ENCODE measurements at regions of chr12 and their contacts with region 1.

Region 1: DNA sequence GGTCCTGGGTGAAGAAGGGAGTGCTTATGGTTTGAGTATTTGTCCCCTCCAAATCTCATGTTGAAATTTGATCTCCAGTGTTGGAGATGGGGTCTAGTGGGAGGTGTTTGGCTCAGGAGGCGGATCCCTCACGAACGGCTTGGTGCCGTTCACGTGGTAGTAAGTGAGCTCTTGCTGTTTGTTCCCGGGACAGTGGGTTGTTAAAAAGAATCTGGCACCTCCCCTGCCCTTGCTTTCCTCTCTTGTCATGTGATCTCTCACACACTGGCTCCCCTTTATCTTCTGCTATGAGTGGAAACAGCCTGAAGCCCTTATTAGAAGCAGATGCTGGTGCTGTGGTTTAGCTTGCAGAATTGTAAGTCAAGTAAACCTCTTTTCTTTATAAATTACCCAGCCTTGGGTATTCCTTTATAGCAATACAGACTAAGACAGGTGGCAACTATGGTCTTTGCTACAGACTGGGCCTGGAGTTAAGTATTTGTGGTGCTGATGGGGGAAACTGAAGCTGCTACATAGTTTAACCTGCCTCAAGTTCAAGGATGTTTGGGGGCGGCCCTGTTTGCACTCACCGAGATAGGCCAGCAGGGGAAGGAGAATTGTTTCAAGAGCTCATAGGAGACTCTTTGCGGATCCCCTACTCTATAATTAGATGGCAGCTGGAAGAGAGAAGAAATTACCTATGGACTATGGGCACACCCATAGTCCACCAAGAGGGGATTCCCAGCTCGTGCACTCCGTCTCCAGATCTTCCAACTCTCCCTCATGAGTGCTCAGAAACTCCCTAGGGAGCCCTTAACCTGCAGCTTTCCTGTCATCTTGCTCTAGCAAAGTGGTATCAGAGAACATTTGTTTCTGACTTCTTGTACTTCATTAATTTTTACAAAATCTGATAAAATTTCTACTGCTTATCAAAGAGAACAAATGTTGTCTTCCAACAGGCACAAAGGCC is 164.6 kb downstream of the SLC15A5 start:
- DNase-seq: no peak
- ATAC-seq: no peak
- H3K4me3 ChIP-seq: no peak overlapping the region
- H3K27ac ChIP-seq: no peak overlapping the region
- H3K4me1 ChIP-seq: no peaks in the 10 kb centered on the region
- H3K27me3 ChIP-seq: no peaks in the 10 kb centered on the region
- CTCF ChIP-seq: no peak
- POLR2A ChIP-seq: no peak
- RAD21 ChIP-seq: no peak

Region 2: GRCh38 chr12:16056910-16057309 is 56.0 kb before region 1 on chr12:
- CTCF ChIA-PET with region 1: no interaction called
- POLR2A ChIA-PET with region 1: no interaction called
- dilution Hi-C with region 1: no loop called
- in situ Hi-C with region 1: loop called (anchors 10 kb)
- intact Hi-C with region 1: no loop called
- DNase-seq: no peak
- ATAC-seq: no peak
- H3K4me3 ChIP-seq: no peak overlapping the region
- H3K27ac ChIP-seq: no peak overlapping the region
- H3K4me1 ChIP-seq: no peaks in the 10 kb centered on the region
- H3K27me3 ChIP-seq: no peaks in the 10 kb centered on the region
- CTCF ChIP-seq: no peak
- POLR2A ChIP-seq: no peak
- RAD21 ChIP-seq: no peak

Region 3: DNA sequence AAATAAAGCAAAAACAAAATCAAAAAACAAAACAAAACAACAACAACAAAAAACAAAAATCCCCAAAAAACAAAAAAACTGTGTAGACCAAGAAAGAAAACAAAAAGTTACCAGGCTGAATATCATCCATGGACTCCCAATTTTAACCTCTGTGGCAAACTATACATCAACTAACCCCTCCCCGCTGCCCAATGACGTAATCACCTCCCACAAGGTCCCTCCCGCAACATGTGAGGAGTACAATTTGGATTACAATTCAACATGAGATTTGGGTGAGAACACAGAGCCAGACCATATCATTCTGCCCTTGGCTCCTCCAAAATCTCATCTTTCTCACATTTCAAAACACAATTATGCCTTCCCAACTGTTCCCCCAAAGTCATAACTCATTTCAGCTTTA is 21.9 kb before region 1 on chr12:
- CTCF ChIA-PET with region 1: interaction called, 4 read pairs
- POLR2A ChIA-PET with region 1: no interaction called
- dilution Hi-C with region 1: no loop called
- in situ Hi-C with region 1: no loop called
- intact Hi-C with region 1: loop called (anchors 1 kb)
- DNase-seq: no peak
- ATAC-seq: no peak
- H3K4me3 ChIP-seq: no peak overlapping the region
- H3K27ac ChIP-seq: no peak overlapping the region
- H3K4me1 ChIP-seq: no peaks in the 10 kb centered on the region
- H3K27me3 ChIP-seq: no peaks in the 10 kb centered on the region
- CTCF ChIP-seq: no peak
- POLR2A ChIP-seq: no peak
- RAD21 ChIP-seq: no peak

Region 4: GRCh38 chr12:16612647-16613046 is 499.8 kb after region 1 on chr12:
- CTCF ChIA-PET with region 1: no interaction called
- POLR2A ChIA-PET with region 1: no interaction called
- dilution Hi-C with region 1: no loop called
- in situ Hi-C with region 1: no loop called
- intact Hi-C with region 1: no loop called
- DNase-seq: peak; percentile 20
- ATAC-seq: no peak
- H3K4me3 ChIP-seq: no peak overlapping the region
- H3K27ac ChIP-seq: no peak overlapping the region
- H3K4me1 ChIP-seq: no peaks in the 10 kb centered on the region
- H3K27me3 ChIP-seq: peaks cover 14% of the 10 kb centered on the region
- CTCF ChIP-seq: no peak
- POLR2A ChIP-seq: no peak
- RAD21 ChIP-seq: no peak